Activated T-helper 2 cell treated with anti-CD3 and anti-CD28 coated beads, Interferon-gamma antibody, Interleukin-2, Interleukin-4, amounts not matched to agents 10 μg/mL and 5 μg/mL and 100 μg/mL, durations not matched to agents 14 hours and 24 hours and 36 hours (primary cell): ENCODE measurements at regions of chr22 and their contacts with region 1.

Region 1: DNA sequence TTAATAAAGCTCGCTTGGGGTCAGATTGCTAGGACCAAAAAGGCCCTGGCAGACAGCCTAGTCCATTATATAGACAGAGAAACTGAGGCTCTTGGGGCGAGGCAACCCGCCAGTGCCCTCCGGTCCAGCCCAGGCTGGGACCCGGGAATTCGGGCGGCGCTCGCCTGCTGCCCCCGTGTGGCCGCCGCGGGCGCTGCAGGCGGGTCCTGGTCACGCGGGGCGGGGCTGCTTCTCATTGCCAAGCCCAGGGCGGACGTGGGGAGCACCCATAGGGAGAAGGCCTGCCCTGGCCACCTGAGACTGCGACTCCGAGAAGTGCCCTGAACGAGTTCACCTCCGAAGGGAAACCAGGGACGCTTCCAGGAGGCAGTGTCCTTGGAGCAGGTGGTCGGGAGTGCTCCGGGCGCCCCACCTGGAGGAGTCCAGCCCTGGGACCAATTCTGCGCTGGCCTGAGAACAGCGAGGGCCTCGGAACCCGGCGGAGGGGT is 36.0 kb upstream of the CSNK1E start:
- DNase-seq: peak; percentile 59
- H3K4me3 Mint-ChIP-seq: no peak overlapping the region
- H3K27ac Mint-ChIP-seq: no peak overlapping the region
- H3K4me1 Mint-ChIP-seq: no peaks in the 10 kb centered on the region
- H3K27me3 Mint-ChIP-seq: no peaks in the 10 kb centered on the region

Region 2: GRCh38 chr22:38051900-38052862 is 301.0 kb before region 1 on chr22:
- intact Hi-C with region 1: loop called (anchors 5 kb)
- DNase-seq: peak; percentile 60
- H3K4me3 Mint-ChIP-seq: no peak overlapping the region
- H3K27ac Mint-ChIP-seq: no peak overlapping the region
- H3K4me1 Mint-ChIP-seq: peaks cover 5% of the 10 kb centered on the region
- H3K27me3 Mint-ChIP-seq: peaks cover 6% of the 10 kb centered on the region

Region 3: DNA sequence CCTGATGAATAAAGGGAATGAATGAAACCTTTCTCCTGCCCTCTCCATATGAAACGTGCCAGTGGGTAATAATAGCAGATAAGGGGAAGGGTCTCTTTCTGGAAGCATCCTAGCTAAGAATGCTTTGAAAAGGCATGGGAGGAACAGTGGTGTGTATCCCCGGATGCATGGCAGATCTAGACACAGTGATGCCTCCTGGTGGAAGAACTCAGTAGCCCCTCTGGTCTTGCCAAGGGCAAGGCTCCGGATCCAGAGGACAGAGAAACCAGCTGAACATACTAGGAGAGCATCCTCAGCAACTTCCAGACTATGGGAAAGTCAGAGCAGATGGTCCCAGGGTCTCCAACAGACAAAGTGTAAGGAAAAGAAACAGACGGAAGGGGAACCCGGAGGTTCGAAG is 249.1 kb before region 1 on chr22:
- intact Hi-C with region 1: loop called (anchors 10 kb)
- DNase-seq: no peak
- H3K4me3 Mint-ChIP-seq: no peak overlapping the region
- H3K27ac Mint-ChIP-seq: no peak overlapping the region
- H3K4me1 Mint-ChIP-seq: peaks cover 7% of the 10 kb centered on the region
- H3K27me3 Mint-ChIP-seq: peaks cover 3% of the 10 kb centered on the region

Region 4: DNA sequence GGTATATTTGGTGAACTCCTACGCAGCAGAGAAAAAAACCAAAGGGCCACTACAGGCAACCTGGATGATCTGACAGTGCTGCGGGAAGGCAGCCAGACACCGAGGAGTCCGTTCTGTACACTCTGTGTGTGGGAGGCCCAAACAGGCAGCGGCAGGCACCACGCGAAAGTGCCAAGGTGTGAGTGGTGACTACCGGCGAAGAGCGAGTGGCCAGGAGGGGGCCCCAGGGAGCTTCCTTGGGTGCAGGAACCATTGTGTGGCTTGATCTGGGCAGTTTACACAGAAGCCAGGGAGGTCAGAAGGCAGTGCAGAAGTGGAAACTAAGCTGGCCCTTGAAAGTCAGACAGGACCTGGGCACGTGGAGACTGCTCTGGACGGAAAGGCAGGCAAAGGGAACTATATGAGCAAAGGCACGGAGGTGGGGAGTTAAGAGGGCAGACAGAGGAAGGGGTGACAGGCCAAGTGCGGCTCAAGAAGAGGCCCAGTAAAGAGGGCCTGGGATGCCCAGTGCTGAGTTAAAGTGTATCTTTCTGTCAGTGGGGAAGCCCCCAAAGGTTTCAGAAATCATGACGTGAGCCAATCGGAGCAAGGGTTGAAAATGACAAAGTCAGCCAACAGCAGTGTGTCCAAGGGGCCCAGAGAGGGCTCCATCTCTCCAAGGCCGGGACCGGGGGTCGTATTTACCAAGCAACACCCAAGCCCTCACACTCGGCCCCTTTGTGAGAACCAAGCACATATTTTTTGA is 91.0 kb before region 1 on chr22:
- intact Hi-C with region 1: loop called (anchors 5 kb)
- DNase-seq: peak; percentile 28
- H3K4me3 Mint-ChIP-seq: no peak overlapping the region
- H3K27ac Mint-ChIP-seq: no peak overlapping the region
- H3K4me1 Mint-ChIP-seq: peaks cover 16% of the 10 kb centered on the region
- H3K27me3 Mint-ChIP-seq: no peaks in the 10 kb centered on the region